ENCODE measurements at regions of chr1 and their contacts with region 1.

Region 1: GRCh38 chr1:48202030-48202752 is 20.3 kb upstream of the SLC5A9 start:
- DNase-seq: peak; percentile 62 to 69 (median 64)
- ATAC-seq: peak; percentile 90
- H3K4me3 ChIP-seq: no peak overlapping the region
- H3K27ac ChIP-seq: no peak overlapping the region
- H3K4me1 ChIP-seq: no peaks in the 10 kb centered on the region
- H3K27me3 ChIP-seq: no peaks in the 10 kb centered on the region
- CTCF ChIP-seq: peak; percentile 83 to 88 (median 87)
- EP300 ChIP-seq: no peak
- POLR2A ChIP-seq: no peak
- RAD21 ChIP-seq: peak; percentile 76 to 84

Region 2: GRCh38 chr1:47738560-47739182 is 463.5 kb before region 1 on chr1:
- CTCF ChIA-PET with region 1: interaction called, 5 read pairs
- POLR2A ChIA-PET with region 1: no interaction called
- in situ Hi-C with region 1: no loop called
- intact Hi-C with region 1: loop called (anchors 2 kb)
- DNase-seq: peak; percentile 59 to 80 (median 74)
- ATAC-seq: peak; percentile 97
- H3K4me3 ChIP-seq: no peak overlapping the region
- H3K27ac ChIP-seq: no peak overlapping the region
- H3K4me1 ChIP-seq: no peaks in the 10 kb centered on the region
- H3K27me3 ChIP-seq: no peaks in the 10 kb centered on the region
- CTCF ChIP-seq: peak; percentile 77 to 81 (median 79)
- EP300 ChIP-seq: no peak
- POLR2A ChIP-seq: no peak
- RAD21 ChIP-seq: peak; percentile 34 to 69

Region 3: GRCh38 chr1:47755101-47755990 is 446.8 kb before region 1 on chr1:
- CTCF ChIA-PET with region 1: no interaction called
- POLR2A ChIA-PET with region 1: no interaction called
- in situ Hi-C with region 1: loop called (anchors 25 kb)
- intact Hi-C with region 1: no loop called
- DNase-seq: peak; percentile 68 to 83 (median 80)
- ATAC-seq: peak; percentile 93
- H3K4me3 ChIP-seq: no peak overlapping the region
- H3K27ac ChIP-seq: no peak overlapping the region
- H3K4me1 ChIP-seq: peaks cover 0 to 3% of the 10 kb centered on the region in 2 experiments; a peak in 1 of 5 replicates
- H3K27me3 ChIP-seq: peaks cover 18 to 37% of the 10 kb centered on the region in 2 experiments; a peak in 4 of 5 replicates
- CTCF ChIP-seq: peak; percentile 76 to 94 (median 84)
- EP300 ChIP-seq: no peak
- POLR2A ChIP-seq: no peak
- RAD21 ChIP-seq: peak; percentile 15 to 55; a peak in 1 of 4 replicates

Region 4: DNA sequence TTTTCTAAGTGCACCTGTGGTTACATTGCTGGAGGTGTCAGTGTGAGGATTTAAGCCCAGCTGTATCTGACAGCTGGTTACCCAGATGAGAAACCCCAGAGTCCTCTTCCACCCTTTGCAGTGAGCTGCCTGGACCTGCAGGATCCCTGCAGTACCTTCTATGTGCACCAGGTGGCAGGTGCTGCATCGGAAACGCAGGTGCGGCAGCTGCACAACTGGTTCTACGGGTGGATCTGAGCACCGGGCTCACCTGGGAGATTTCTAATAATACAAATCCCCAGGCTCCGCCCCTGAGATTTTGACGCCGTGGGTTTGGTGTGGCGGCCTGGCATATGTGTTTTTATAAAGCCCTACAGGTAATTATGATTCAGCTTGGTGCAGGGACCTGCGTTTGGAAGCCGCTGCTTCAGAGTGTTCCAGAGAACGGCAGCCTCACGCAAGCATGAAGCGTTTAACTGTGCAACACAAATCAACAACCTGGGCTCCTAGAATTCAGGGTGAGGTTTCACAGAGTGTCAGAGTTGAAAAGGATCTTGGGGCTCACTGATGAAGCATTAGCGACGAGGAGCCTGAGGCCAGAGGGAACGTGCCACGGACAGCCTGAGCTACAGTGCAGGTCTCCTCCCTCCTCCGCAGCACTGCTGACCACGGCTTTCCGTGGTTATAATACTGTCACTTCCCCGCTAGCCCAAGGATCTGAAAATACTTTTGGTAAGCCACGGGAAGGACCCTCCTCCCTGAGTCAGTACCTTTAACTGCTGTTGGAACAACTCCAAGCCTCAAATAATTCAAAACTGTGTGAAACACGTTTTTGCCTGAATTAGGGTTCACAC is 108.3 kb before region 1 on chr1:
- CTCF ChIA-PET with region 1: interaction called, 11 read pairs
- POLR2A ChIA-PET with region 1: no interaction called
- in situ Hi-C with region 1: no loop called
- intact Hi-C with region 1: loop called (anchors 1 kb)
- DNase-seq: peak; percentile 75 to 82 (median 79)
- ATAC-seq: peak; percentile 98
- H3K4me3 ChIP-seq: no peak overlapping the region
- H3K27ac ChIP-seq: no peak overlapping the region
- H3K4me1 ChIP-seq: peaks cover 0 to 5% of the 10 kb centered on the region in 2 experiments; a peak in 1 of 5 replicates
- H3K27me3 ChIP-seq: peaks cover 0 to 8% of the 10 kb centered on the region in 2 experiments; a peak in 2 of 5 replicates
- CTCF ChIP-seq: peak; percentile 80 to 89 (median 87)
- EP300 ChIP-seq: no peak
- POLR2A ChIP-seq: no peak
- RAD21 ChIP-seq: peak; percentile 43 to 77

Region 5: DNA sequence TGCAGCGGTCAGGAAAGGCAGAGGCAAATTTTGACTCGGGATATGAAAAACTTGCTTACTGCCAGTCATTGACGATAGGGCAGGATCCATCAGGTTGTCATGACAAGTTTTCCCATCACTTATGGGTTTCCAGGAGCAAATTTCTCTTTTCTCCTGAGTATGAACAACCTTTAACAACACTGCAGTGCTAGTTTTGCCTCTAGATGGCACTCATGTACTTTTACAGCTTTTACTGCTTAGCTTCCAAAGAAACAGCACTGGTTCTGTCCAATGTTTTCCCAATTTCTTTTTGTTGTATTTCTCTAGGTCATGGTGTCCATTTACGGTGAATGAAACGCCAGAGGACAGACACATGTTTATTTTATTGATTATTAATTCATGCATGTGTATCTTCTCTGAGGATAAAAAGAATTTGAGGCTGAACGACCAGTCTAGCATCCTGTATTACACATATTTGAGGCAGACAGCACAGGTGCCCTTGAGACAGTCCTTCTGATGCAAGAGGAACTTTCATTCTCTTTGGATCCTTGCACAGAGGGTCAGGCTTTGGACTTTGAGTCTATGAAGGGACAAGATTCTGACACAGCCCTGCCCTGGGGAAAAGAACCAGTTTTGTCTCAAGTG is 92.7 kb before region 1 on chr1:
- CTCF ChIA-PET with region 1: interaction called, 65 read pairs
- POLR2A ChIA-PET with region 1: no interaction called
- in situ Hi-C with region 1: loop called (anchors 5 kb)
- intact Hi-C with region 1: loop called (anchors 1 kb)
- DNase-seq: peak in 2 of 4 experiments; percentile 34 to 61
- ATAC-seq: peak; percentile 84
- H3K4me3 ChIP-seq: no peak overlapping the region
- H3K27ac ChIP-seq: no peak overlapping the region
- H3K4me1 ChIP-seq: no peaks in the 10 kb centered on the region
- H3K27me3 ChIP-seq: no peaks in the 10 kb centered on the region
- CTCF ChIP-seq: peak; percentile 63 to 88 (median 78); a peak in 5 of 6 replicates
- EP300 ChIP-seq: no peak
- POLR2A ChIP-seq: no peak
- RAD21 ChIP-seq: peak; percentile 88 to 93

Region 6: DNA sequence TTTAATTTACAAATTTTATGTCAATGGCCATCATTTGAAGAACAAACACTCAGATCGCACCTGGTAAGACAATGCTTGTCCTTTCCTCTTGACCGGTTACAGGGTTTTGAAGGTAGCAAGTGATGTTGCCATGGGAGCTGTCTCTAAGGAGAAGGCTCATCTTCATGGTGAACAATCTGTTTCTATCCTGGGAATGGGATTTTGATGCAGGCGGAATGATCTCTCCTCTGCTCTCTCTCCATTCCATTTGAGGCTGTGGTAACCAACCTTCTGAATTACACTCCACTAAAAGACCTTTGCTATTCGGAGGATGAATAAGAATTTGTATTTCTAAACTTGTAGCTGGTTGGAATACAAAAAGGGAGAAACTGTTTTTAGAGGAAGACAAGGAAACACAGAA is 37.6 kb before region 1 on chr1:
- CTCF ChIA-PET with region 1: no interaction called
- POLR2A ChIA-PET with region 1: no interaction called
- in situ Hi-C with region 1: no loop called
- intact Hi-C with region 1: no loop called
- DNase-seq: no peak
- ATAC-seq: no peak
- H3K4me3 ChIP-seq: no peak overlapping the region
- H3K27ac ChIP-seq: no peak overlapping the region
- H3K4me1 ChIP-seq: no peaks in the 10 kb centered on the region
- H3K27me3 ChIP-seq: no peaks in the 10 kb centered on the region
- CTCF ChIP-seq: no peak
- EP300 ChIP-seq: no peak
- POLR2A ChIP-seq: no peak
- RAD21 ChIP-seq: no peak

Region 7: DNA sequence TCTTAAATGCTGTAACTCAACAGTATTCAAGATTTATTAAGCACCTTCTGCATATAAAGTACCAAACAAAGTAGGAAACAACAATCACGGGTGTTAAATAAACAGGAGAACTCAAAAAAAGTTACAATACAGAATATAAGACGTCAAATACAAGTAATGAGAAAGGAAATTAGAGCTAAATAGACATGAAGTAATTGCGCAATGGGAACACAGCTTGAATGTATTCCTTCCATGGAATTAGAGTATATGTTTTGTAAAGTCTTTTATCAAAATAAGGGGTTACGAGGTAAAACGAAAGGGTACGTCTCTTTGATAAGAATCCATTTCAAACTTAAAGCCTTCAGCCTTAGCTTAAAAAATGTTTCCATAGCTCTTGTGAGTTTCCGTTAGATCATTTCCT is 160.7 kb after region 1 on chr1:
- CTCF ChIA-PET with region 1: no interaction called
- POLR2A ChIA-PET with region 1: no interaction called
- in situ Hi-C with region 1: no loop called
- intact Hi-C with region 1: no loop called
- DNase-seq: no peak
- ATAC-seq: no peak
- H3K4me3 ChIP-seq: no peak overlapping the region
- H3K27ac ChIP-seq: no peak overlapping the region
- H3K4me1 ChIP-seq: no peaks in the 10 kb centered on the region
- H3K27me3 ChIP-seq: no peaks in the 10 kb centered on the region
- CTCF ChIP-seq: no peak
- EP300 ChIP-seq: no peak
- POLR2A ChIP-seq: no peak
- RAD21 ChIP-seq: no peak

Region 8: DNA sequence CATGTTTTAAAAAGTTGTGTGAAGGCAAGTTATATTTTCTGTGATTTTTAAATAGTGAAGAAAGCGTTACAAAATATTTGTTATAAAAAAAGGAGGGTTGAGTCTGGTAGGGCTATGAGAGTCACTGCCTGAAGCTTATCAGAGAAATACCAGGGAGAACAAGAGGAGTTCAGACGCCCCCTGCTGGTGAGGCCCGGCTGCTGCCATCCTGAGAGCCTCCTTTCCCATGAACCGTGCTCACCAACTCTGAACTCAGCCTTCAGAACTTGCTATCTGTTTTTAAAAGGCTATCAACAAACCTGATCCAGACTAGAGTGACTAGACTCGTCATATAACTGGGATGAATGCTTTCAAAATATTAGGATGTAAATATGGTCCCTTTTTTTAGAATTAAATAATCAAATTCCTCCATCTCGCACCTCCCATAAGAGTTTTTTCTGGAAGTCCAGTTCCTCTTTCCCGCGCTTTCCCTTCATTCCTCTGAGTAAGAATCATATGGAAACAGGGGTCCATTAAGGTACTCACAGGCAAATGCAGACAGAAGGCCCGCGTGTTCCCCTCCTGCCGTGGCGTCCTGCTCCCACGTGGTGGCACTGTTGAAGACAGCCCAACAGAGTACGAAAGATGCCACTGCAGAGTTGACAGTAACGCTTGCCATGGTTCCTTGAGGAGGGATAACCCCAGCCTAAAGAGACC is 296.1 kb after region 1 on chr1:
- CTCF ChIA-PET with region 1: interaction called, 3 read pairs
- POLR2A ChIA-PET with region 1: no interaction called
- in situ Hi-C with region 1: no loop called
- intact Hi-C with region 1: loop called (anchors 10 kb)
- DNase-seq: peak; percentile 76 to 86 (median 83)
- ATAC-seq: peak; percentile 98
- H3K4me3 ChIP-seq: no peak overlapping the region
- H3K27ac ChIP-seq: no peak overlapping the region
- H3K4me1 ChIP-seq: no peaks in the 10 kb centered on the region
- H3K27me3 ChIP-seq: no peaks in the 10 kb centered on the region
- CTCF ChIP-seq: peak; percentile 81 to 90 (median 85)
- EP300 ChIP-seq: no peak
- POLR2A ChIP-seq: no peak
- RAD21 ChIP-seq: peak; percentile 46 to 56

Measured in K562 (cell line).